WTC11 (cell line): ENCODE measurements at regions of chr19 and their contacts with region 1.

Region 1: DNA sequence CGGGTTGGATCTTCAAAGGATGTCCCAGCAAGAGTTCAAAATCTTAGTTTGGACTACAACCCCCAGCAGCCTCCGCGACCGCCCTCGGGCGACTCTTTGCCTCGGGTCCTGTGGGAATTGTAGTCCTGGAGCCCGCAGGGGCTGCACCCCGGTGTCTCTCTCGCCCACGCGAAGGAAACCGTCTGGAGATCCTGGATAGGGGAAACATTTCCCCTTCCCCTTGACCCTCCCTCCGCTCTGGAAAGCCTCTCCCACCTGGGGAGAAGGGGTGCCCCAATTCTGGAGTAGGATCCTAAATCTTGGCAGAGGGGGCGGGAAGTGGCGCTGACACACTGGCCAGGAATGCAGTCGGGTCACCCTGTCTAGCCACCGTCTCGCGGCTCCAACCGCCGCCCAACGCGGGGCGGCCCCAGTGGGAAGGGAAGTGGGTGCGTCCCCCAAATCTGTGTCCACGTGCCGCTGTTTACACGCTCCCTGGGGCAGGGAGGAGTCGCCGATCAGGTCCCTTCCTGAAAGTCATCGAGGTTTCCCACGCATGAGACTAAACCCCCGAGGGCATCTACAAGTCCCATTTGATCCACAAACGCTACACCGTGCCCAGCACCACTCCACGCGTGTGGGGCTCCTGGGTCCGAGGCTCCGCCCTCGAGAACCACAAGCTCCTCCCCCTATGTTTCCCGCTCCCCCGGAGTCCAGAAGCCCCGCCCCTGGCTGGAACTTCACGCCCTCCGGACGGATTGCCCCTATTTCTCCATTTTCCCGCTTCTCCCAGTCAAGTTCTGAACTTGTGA is 761 bp upstream of the PPP1R13L start:
- DNase-seq: peak; percentile 93
- ATAC-seq: peak; percentile 32
- H3K4me3 Mint-ChIP-seq: peak overlapping the region; percentile 96
- H3K27ac Mint-ChIP-seq: peak overlapping the region; percentile 99
- H3K4me1 Mint-ChIP-seq: peaks cover 23% of the 10 kb centered on the region
- H3K27me3 Mint-ChIP-seq: peaks cover 7% of the 10 kb centered on the region; the same call in 1 of the 2 replicates
- CTCF ChIP-seq: no peak

Region 2: GRCh38 chr19:45385392-45386221 is 20.0 kb before region 1 on chr19:
- CTCF ChIA-PET with region 1: interaction called, 35 read pairs
- POLR2A ChIA-PET with region 1: no interaction called
- DNase-seq: peak; percentile 67
- ATAC-seq: peak; percentile 84
- H3K4me3 Mint-ChIP-seq: peak overlapping the region; percentile 58
- H3K27ac Mint-ChIP-seq: no peak overlapping the region
- H3K4me1 Mint-ChIP-seq: no peaks in the 10 kb centered on the region
- H3K27me3 Mint-ChIP-seq: peaks cover 46% of the 10 kb centered on the region
- CTCF ChIP-seq: no peak

Region 3: GRCh38 chr19:45391340-45391739 is 14.3 kb before region 1 on chr19:
- CTCF ChIA-PET with region 1: interaction called, 35 read pairs
- POLR2A ChIA-PET with region 1: interaction called, 4 read pairs
- DNase-seq: peak; percentile 46
- ATAC-seq: peak; percentile 81
- H3K4me3 Mint-ChIP-seq: no peak overlapping the region
- H3K27ac Mint-ChIP-seq: peak overlapping the region; percentile 95; the same call in 1 of the 2 replicates
- H3K4me1 Mint-ChIP-seq: peaks cover 5% of the 10 kb centered on the region
- H3K27me3 Mint-ChIP-seq: peaks cover 32% of the 10 kb centered on the region
- CTCF ChIP-seq: no peak

Region 4: GRCh38 chr19:45417151-45417550 is 11.5 kb after region 1 on chr19:
- CTCF ChIA-PET with region 1: interaction called, 21 read pairs
- POLR2A ChIA-PET with region 1: interaction called, 3 read pairs
- DNase-seq: no peak
- ATAC-seq: no peak
- H3K4me3 Mint-ChIP-seq: no peak overlapping the region
- H3K27ac Mint-ChIP-seq: peak overlapping the region; percentile 70
- H3K4me1 Mint-ChIP-seq: peaks cover 4% of the 10 kb centered on the region; the same call in 1 of the 2 replicates
- H3K27me3 Mint-ChIP-seq: no peaks in the 10 kb centered on the region
- CTCF ChIP-seq: no peak